Posterior vena cava (tissue), 2 donors: ENCODE measurements at regions of chr19 and their contacts with region 1.

Region 1: GRCh38 chr19:40774916-40775631 is at the start of gene MIA:
- DNase-seq: no peak
- total RNA-seq, gene MIA: 1.6 TPM in 1 of 2 donors, not detected in the other

Region 2: DNA sequence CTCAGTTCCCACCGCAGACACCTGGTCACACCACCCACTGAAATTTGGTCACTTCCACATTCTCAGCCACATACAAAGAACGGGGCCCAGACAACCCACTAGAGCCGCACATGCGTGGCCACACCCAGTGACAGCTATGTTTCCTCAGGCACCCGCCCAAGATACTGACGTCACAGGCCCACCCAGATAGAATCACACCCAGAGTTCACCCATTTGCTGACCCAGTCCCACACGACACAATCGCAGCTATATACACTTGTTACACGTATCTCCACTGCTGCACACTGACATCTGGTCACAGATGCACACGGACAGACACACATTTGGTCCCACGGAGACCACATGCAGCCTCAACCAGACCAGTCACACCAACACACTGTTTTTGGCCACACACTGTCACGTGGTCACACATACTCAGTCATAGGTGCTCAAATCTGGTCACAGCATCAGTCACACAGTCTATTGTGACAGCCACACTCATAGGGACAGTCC is 87.5 kb before region 1 on chr19:
- intact Hi-C with region 1: no loop called
- DNase-seq: peak; percentile 96

Region 3: DNA sequence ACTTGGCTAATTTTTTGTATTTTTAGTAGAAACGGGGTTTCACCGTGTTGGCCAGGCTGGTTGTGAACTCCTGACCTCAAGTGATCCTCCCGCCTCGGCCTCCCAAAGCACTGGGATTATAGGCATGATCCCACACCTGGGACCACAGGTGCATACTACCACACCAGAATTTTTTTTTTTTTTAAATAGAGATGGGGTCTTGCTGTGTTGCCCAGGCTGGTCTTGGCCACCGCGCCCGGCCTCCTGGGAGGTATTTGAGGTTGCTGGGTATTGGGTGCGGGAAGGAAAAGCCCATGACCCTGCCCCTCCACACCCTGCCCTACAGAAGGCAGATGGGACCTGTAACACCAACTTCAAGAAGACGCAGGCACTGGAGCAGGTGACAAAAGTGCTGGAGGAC is 38.4 kb before region 1 on chr19:
- intact Hi-C with region 1: loop called in 1 of 2 experiments (anchors 1 kb)
- DNase-seq: no peak

Region 4: DNA sequence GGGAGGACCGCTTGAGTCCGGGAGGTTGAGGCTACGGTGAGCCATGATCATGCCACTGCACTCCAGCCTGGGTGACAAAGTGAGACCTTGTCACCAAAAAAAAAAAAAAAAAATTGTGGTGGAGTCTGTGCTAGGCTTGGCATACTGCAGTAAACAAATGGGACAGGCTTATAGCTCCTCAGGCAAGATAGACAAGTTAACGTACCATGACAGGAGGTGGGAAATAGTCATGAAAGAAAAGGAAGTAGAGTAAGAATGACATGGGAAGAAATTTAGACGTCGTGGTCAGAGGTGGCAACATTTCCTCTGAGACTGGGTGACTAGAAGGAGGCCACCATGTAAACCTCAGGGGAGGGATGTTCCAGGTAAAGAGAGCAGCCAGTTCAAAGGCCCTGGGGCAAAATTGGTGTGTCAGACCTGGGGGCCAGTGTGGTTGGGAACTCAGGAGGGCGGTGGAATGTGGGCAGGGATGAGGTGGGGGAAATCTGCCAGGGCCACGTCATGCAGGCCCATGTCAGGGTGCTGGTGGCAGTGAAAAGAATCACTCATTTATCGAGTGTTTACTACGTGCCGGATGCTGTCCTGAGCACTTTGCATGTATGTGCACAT is 18.5 kb before region 1 on chr19:
- intact Hi-C with region 1: loop called in 1 of 2 experiments (anchors 2 kb)
- DNase-seq: no peak

Region 5: GRCh38 chr19:40872209-40872608 is 97.1 kb after region 1 on chr19:
- intact Hi-C with region 1: no loop called
- DNase-seq: no peak